HepG2 (cell line): ENCODE measurements at regions of chr13 and their contacts with region 1.

Region 1: DNA sequence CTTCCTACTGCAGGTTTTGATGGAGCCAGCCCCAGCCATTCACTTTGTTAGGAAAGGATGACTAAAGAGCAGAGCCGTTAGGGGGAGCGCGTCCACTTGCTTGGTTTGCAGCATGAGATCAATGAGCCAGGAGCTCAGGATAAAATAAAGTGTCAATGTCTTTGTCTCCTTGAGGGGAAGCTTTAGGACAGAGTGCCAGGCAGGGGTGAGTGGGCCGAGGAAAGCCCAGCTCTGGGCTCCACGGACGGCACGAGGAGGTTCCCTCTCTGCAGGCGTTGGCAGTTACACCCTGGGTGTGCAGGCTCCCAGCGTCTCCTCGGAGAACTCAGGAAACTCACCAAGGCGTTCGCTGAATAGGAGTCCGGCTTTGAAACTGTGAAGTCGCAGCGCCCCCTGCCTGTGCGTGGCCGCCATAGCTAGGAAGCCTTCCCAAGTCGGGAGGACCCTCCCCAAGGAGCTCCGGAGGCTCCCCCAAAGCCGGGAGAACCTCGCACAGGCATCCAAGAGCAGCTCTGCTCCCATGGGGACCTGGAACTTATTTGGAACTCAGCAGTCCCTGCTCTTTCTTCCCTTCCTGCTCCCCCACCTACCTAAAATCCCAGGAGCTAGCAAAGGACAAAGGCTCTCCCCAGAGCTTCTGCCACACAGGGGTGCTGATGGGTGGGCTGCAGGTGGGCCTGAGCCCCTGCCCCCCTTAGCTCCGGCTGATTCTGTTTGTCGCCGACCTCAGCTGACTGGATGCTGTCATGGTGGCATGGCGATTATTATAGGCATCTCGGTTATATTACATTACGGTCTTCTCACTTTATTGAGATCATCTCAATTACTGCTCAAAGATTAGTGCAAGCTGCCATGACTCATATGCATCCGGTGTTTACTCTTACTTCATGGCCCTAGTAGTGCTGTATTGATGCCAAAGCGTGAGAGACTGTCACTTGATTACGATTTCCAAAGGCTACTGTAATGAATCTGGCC is 34.4 kb downstream of the GSX1 start:
- DNase-seq: peak; percentile 66
- ATAC-seq: peak; percentile 89
- H3K4me3 ChIP-seq: peak overlapping the region in 2 of 3 experiments; percentile 11 to 60; a peak in 2 of 6 replicates
- H3K27ac ChIP-seq: no peak overlapping the region
- H3K4me1 ChIP-seq: peaks cover 15% of the 10 kb centered on the region; the same call in 1 of the 2 replicates
- H3K27me3 ChIP-seq: peaks cover 2 to 23% of the 10 kb centered on the region in 2 experiments; a peak in 3 of 5 replicates
- CTCF ChIP-seq: peak; percentile 91
- EP300 ChIP-seq: no peak
- POLR2A ChIP-seq: no peak
- RAD21 ChIP-seq: peak; percentile 91

Region 2: DNA sequence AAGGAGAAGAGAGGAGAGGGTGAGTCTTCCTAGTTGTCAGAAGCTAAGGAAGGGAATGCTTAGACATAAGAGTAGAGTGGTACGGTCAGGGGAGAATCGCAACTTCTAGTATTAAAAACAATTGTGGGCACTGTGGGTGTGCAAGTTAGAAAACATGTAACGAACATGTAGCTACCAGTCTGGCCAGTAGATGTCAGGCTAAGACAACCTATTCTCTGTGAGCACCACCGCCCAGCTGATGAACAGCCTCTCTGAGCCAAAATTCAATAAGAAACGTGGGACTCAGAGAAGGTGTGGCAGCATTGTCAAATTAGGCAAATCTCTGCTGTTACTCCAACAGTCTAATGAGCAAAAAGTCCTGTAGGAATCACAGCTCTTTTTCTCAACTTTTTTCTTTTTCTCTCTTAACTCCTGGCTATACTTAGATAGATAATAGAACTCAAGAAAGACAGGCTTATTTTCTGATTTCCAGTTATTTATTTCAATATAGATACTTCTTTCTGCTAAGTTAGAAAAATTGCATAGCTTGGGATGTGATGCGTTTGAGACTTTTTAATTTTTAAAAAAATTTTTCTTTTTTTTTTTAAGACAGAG is 841.3 kb before region 1 on chr13:
- CTCF ChIA-PET with region 1: no interaction called
- POLR2A ChIA-PET with region 1: no interaction called
- in situ Hi-C with region 1: loop called (anchors 10 kb)
- intact Hi-C with region 1: no loop called
- DNase-seq: peak; percentile 74
- ATAC-seq: peak; percentile 36
- H3K4me3 ChIP-seq: no peak overlapping the region
- H3K27ac ChIP-seq: no peak overlapping the region
- H3K4me1 ChIP-seq: peaks cover 93% of the 10 kb centered on the region
- H3K27me3 ChIP-seq: no peaks in the 10 kb centered on the region
- CTCF ChIP-seq: peak; percentile 91
- EP300 ChIP-seq: no peak
- POLR2A ChIP-seq: no peak
- RAD21 ChIP-seq: peak; percentile 87

Region 3: DNA sequence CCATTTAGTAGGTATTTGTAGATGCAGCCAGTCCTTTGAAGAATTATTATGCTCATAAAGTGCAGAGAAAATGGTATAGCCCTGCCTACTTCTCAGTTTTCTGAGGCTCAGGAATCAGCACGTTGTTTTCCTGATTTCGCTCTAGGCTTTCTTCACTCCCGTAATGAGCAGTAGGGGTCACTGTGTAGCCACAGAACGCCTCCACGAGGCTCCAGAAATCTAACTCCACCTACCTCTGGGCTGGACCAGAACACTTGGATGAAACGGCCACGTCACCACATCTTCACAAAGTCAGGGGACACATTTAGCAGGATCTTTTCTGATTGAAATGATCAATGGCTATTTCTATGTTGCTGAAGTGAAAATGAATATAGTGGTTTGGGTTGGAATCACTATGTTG is 452.0 kb before region 1 on chr13:
- CTCF ChIA-PET with region 1: interaction called, 29 read pairs
- POLR2A ChIA-PET with region 1: interaction called, 3 read pairs
- in situ Hi-C with region 1: loop called (anchors 5 kb)
- intact Hi-C with region 1: loop called (anchors 1 kb)
- DNase-seq: peak; percentile 74
- ATAC-seq: peak; percentile 80
- H3K4me3 ChIP-seq: peak overlapping the region in 1 of 3 experiments; percentile 33; a peak in 1 of 6 replicates
- H3K27ac ChIP-seq: no peak overlapping the region
- H3K4me1 ChIP-seq: peaks cover 42% of the 10 kb centered on the region
- H3K27me3 ChIP-seq: peaks cover 0 to 17% of the 10 kb centered on the region in 2 experiments; a peak in 4 of 5 replicates
- CTCF ChIP-seq: peak; percentile 87
- EP300 ChIP-seq: no peak
- POLR2A ChIP-seq: no peak
- RAD21 ChIP-seq: peak; percentile 73

Region 4: GRCh38 chr13:27533155-27533643 is 293.5 kb before region 1 on chr13:
- CTCF ChIA-PET with region 1: interaction called, 29 read pairs
- POLR2A ChIA-PET with region 1: interaction called, 3 read pairs
- in situ Hi-C with region 1: loop called (anchors 10 kb)
- intact Hi-C with region 1: loop called (anchors 1 kb)
- DNase-seq: peak; percentile 65
- ATAC-seq: peak; percentile 96
- H3K4me3 ChIP-seq: peak overlapping the region; percentile 16 to 54 (median 20); a peak in 5 of 6 replicates
- H3K27ac ChIP-seq: no peak overlapping the region
- H3K4me1 ChIP-seq: peaks cover 29% of the 10 kb centered on the region
- H3K27me3 ChIP-seq: no peaks in the 10 kb centered on the region
- CTCF ChIP-seq: peak; percentile 98
- EP300 ChIP-seq: 0 out of 4 replicates have a peak, but pooled peaks of 1 of the 2 experiments have one; percentile 30
- POLR2A ChIP-seq: no peak
- RAD21 ChIP-seq: peak; percentile 93

Region 5: GRCh38 chr13:27783111-27783510 is 43.6 kb before region 1 on chr13:
- CTCF ChIA-PET with region 1: no interaction called
- POLR2A ChIA-PET with region 1: no interaction called
- in situ Hi-C with region 1: no loop called
- intact Hi-C with region 1: no loop called
- DNase-seq: peak; percentile 14
- ATAC-seq: peak; percentile 91
- H3K4me3 ChIP-seq: no peak overlapping the region
- H3K27ac ChIP-seq: no peak overlapping the region
- H3K4me1 ChIP-seq: peaks cover 6% of the 10 kb centered on the region; the same call in 1 of the 2 replicates
- H3K27me3 ChIP-seq: peaks cover 0 to 7% of the 10 kb centered on the region in 2 experiments; a peak in 1 of 5 replicates
- CTCF ChIP-seq: peak; percentile 55
- EP300 ChIP-seq: no peak
- POLR2A ChIP-seq: no peak
- RAD21 ChIP-seq: peak; percentile 12; the same call in 1 of the 2 replicates

Region 6: GRCh38 chr13:27889471-27889870 is 62.8 kb after region 1 on chr13:
- CTCF ChIA-PET with region 1: no interaction called
- POLR2A ChIA-PET with region 1: no interaction called
- in situ Hi-C with region 1: no loop called
- intact Hi-C with region 1: no loop called
- DNase-seq: no peak
- ATAC-seq: no peak
- H3K4me3 ChIP-seq: no peak overlapping the region
- H3K27ac ChIP-seq: no peak overlapping the region
- H3K4me1 ChIP-seq: no peaks in the 10 kb centered on the region
- H3K27me3 ChIP-seq: 0 out of 5 replicates have a peak, but pooled peaks cover 0 to 2% of the 10 kb centered on the region in 2 experiments
- CTCF ChIP-seq: no peak
- EP300 ChIP-seq: no peak
- POLR2A ChIP-seq: no peak
- RAD21 ChIP-seq: no peak

Region 7: GRCh38 chr13:27977476-27978300 is 151.0 kb after region 1 on chr13:
- CTCF ChIA-PET with region 1: no interaction called
- POLR2A ChIA-PET with region 1: no interaction called
- in situ Hi-C with region 1: loop called (anchors 5 kb)
- intact Hi-C with region 1: no loop called
- DNase-seq: no peak
- ATAC-seq: peak; percentile 24; the same call in 2 of the 3 replicates
- H3K4me3 ChIP-seq: no peak overlapping the region
- H3K27ac ChIP-seq: no peak overlapping the region
- H3K4me1 ChIP-seq: peaks cover 13% of the 10 kb centered on the region
- H3K27me3 ChIP-seq: peaks cover 10 to 68% of the 10 kb centered on the region in 2 experiments
- CTCF ChIP-seq: no peak
- EP300 ChIP-seq: no peak
- POLR2A ChIP-seq: no peak
- RAD21 ChIP-seq: no peak

Region 8: DNA sequence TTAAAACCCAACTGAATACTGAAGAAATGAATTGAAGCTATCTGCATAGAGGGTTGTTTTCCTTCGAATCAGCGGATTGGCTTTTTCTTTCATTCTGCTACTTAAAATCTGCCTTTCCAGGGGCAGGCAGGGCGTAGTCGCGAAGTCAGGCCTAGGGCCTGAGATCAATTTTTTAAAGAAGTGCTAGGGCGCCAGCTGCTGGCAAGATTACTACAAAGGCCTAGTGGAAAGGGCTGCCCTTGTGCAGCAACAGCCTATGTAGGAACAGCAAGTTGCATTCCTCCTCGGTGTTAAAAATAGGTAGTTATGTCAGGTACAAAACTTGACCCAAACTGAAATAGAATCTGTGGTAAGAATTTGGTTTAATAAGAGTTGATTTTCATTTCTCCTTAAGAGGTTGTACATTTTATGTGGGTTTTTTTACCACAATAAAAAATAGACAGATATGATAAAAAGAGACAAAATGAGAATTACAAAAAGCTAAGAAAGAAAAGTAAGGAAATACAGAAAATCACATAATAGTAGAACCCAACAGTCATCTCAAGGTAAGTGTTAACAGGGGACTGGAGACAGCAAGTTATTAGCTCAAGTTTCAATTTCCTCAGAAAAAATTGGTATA is 171.3 kb after region 1 on chr13:
- CTCF ChIA-PET with region 1: no interaction called
- POLR2A ChIA-PET with region 1: no interaction called
- in situ Hi-C with region 1: no loop called
- intact Hi-C with region 1: loop called (anchors 5 kb)
- DNase-seq: peak; percentile 48
- ATAC-seq: peak; percentile 94
- H3K4me3 ChIP-seq: no peak overlapping the region
- H3K27ac ChIP-seq: no peak overlapping the region
- H3K4me1 ChIP-seq: peaks cover 8% of the 10 kb centered on the region; the same call in 1 of the 2 replicates
- H3K27me3 ChIP-seq: no peaks in the 10 kb centered on the region
- CTCF ChIP-seq: peak; percentile 78
- EP300 ChIP-seq: no peak
- POLR2A ChIP-seq: no peak
- RAD21 ChIP-seq: peak; percentile 58; the same call in 1 of the 2 replicates

Region 9: GRCh38 chr13:28173793-28174192 is 347.1 kb after region 1 on chr13:
- CTCF ChIA-PET with region 1: no interaction called
- POLR2A ChIA-PET with region 1: no interaction called
- in situ Hi-C with region 1: no loop called
- intact Hi-C with region 1: no loop called
- DNase-seq: no peak
- ATAC-seq: no peak
- H3K4me3 ChIP-seq: no peak overlapping the region
- H3K27ac ChIP-seq: no peak overlapping the region
- H3K4me1 ChIP-seq: 0 out of 2 replicates have a peak, but pooled peaks cover 8% of the 10 kb centered on the region
- H3K27me3 ChIP-seq: no peaks in the 10 kb centered on the region
- CTCF ChIP-seq: no peak
- EP300 ChIP-seq: no peak
- POLR2A ChIP-seq: no peak
- RAD21 ChIP-seq: no peak